H1 (cell line): ENCODE measurements at regions of chr10 and their contacts with region 1.

Region 1: DNA sequence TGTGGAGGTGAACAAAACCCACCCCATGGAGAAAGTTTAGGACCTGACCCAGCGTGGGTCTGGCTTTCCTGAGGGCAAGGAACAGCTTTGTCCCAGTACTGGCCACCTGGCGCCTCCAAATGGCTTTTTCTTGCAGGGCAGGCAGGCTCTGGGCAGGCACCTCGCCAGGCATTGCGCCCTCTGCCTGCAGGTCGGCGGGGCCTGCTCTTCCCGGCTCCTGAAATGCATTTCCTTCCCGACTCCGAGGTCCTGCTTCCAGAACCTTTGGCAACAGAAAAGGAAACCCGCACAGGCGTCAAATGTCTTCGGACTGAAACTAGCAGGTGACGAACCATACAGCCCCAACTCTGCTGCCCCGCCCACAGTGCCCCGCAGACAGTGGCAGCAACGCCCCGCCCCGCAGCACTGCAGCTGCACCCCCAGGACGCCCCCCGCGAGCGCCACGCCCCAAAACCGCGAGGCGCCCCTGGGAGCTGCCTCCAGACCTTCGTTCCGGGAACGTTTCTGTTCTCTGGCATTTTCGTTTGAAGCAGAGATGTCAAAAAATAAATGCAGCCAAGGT is 65.5 kb downstream of the C10orf143 start:
- DNase-seq: peak; percentile 43 to 77
- H3K4me3 ChIP-seq: no peak overlapping the region
- H3K27ac ChIP-seq: no peak overlapping the region
- H3K4me1 ChIP-seq: peaks cover 0 to 4% (median 0%) of the 10 kb centered on the region in 4 experiments; a peak in 2 of 7 replicates
- H3K27me3 ChIP-seq: peaks cover 0 to 2% (median 0%) of the 10 kb centered on the region in 4 experiments; a peak in 1 of 7 replicates
- CTCF ChIP-seq: peak; percentile 93 to 99 (median 94)
- EP300 ChIP-seq: no peak
- POLR2A ChIP-seq: no peak
- RAD21 ChIP-seq: peak; percentile 76 to 88

Region 2: GRCh38 chr10:130027716-130028464 is 17.3 kb before region 1 on chr10:
- CTCF ChIA-PET with region 1: interaction called, 12 read pairs
- POLR2A ChIA-PET with region 1: no interaction called
- DNase-seq: no peak
- H3K4me3 ChIP-seq: no peak overlapping the region
- H3K27ac ChIP-seq: no peak overlapping the region
- H3K4me1 ChIP-seq: no peaks in the 10 kb centered on the region
- H3K27me3 ChIP-seq: no peaks in the 10 kb centered on the region
- CTCF ChIP-seq: no peak
- EP300 ChIP-seq: no peak
- POLR2A ChIP-seq: no peak
- RAD21 ChIP-seq: no peak

Region 3: DNA sequence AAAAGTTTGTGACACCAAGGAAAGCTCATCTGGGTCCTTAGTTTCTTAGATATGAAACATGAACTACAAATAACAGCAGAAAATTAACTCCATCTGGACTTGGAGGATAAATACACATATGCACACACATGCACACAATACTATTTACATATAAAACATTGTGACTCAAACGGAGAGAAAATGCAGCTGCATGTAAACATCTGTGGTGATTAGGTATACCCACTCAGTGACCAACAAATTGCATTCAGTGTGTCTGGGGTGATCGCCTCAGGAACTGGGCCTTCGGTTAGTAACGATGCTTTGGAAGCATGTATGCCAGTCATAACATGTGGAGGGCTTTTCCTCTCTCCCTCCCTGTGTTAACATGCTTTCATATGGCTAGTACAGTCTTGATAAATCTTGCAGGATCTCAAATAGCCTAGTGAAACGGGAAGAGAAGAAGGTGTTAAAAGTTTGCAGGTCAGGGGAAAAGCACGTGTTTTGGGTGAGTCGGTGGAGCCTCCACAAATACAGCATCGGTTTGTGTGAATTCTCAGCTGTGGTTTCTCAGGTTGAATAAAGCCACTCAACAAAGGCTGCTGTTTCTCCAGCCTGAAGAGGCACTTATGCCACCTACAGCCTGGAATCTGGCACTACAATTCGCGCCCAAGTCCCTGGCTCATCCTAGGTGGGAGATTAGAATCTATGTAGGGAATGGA is 82.3 kb after region 1 on chr10:
- CTCF ChIA-PET with region 1: interaction called, 11 read pairs
- POLR2A ChIA-PET with region 1: interaction called, 3 read pairs
- DNase-seq: peak in 1 of 2 experiments; percentile 79
- H3K4me3 ChIP-seq: no peak overlapping the region
- H3K27ac ChIP-seq: no peak overlapping the region
- H3K4me1 ChIP-seq: peaks cover 2 to 4% (median 3%) of the 10 kb centered on the region in 4 experiments; a peak in 4 of 7 replicates
- H3K27me3 ChIP-seq: peaks cover 0 to 4% (median 2%) of the 10 kb centered on the region in 4 experiments; a peak in 1 of 7 replicates
- CTCF ChIP-seq: peak; percentile 73 to 90 (median 77)
- EP300 ChIP-seq: no peak
- POLR2A ChIP-seq: no peak
- RAD21 ChIP-seq: peak; percentile 65 to 74